Dorsolateral prefrontal cortex (tissue), 120 donors: ENCODE measurements at regions of chr11 and their contacts with region 1.

Region 1: GRCh38 chr11:20647976-20648565 is 21.3 kb upstream of the NELL1 start:
- DNase-seq: peak in 3 of 10 donors; percentile 39 to 62 (median 50)
- H3K4me3 ChIP-seq: no peak overlapping the region
- H3K27ac ChIP-seq: no peak overlapping the region
- H3K27me3 ChIP-seq: peaks cover 0 to 9% (median 0%) of the 10 kb centered on the region in 45 donors
- CTCF ChIP-seq: peak; percentile 71 to 98 (median 94)

Region 2: DNA sequence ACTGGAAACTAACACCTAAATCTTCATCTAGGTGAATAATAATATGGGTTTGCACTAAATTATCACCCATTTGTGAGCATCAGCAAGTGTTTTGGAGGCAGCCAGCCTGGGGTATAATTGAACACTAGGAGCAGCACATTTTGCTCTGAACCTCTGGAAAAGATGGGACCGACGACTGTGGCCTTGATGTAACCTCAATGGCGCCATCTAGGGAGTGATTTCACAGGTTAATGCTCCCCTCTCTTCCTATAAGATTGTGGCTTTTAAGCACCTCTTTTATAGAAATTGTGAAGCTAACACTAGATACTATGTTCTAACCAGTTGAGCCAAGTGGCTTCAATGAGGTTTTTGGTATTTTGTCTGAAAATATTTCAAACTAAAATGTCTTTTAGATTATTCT is 225.0 kb after region 1 on chr11:
- intact Hi-C with region 1: loop called in 1 of 2 experiments (anchors 10 kb)
- DNase-seq: no peak
- H3K4me3 ChIP-seq: no peak overlapping the region
- H3K27ac ChIP-seq: no peak overlapping the region
- H3K27me3 ChIP-seq: no peaks in the 10 kb centered on the region
- CTCF ChIP-seq: peak in 43 of 56 donors; percentile 6 to 56 (median 35)

Region 3: GRCh38 chr11:21511835-21512440 is 863.9 kb after region 1 on chr11:
- intact Hi-C with region 1: loop called in 1 of 2 experiments (anchors 5 kb)
- DNase-seq: peak in 8 of 10 donors; percentile 3 to 64 (median 40)
- H3K4me3 ChIP-seq: no peak overlapping the region
- H3K27ac ChIP-seq: no peak overlapping the region
- H3K27me3 ChIP-seq: no peaks in the 10 kb centered on the region
- CTCF ChIP-seq: peak in 55 of 56 donors; percentile 18 to 68 (median 49)

Region 4: DNA sequence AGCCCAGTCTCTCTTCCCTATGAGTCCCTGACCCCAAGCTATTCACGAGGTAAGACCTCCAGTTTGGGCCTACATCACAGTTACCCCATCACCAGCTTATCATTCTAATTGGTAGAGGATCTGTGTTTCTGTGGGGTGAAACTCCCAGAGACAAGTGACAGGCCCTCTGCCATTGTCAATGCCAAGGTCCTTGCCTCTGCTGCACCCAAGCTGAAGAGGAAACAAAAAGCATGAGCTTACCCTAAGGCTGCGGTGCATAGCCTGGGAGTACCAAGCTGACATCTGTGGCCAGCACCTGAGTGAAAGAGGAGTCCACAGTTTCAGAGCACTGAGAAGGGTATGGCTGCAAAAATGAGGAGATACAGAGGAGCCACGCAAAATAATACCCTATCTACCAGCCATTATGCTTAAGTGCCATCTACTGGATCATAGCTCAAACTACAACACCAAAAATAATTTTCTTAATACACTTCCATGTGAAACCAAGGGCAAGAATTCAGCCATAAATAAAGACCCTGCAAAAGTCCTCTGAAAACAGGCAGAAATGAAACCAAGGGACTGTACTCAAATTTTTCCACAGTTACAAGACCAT is 1482.5 kb after region 1 on chr11:
- intact Hi-C with region 1: loop called in 1 of 2 experiments (anchors 10 kb)
- DNase-seq: no peak
- H3K4me3 ChIP-seq: no peak overlapping the region
- H3K27ac ChIP-seq: no peak overlapping the region
- H3K27me3 ChIP-seq: no peaks in the 10 kb centered on the region
- CTCF ChIP-seq: peak in 51 of 56 donors; percentile 26 to 65 (median 47)

Region 5: GRCh38 chr11:22304337-22304961 is 1656.4 kb after region 1 on chr11:
- intact Hi-C with region 1: loop called in 1 of 2 experiments (anchors 10 kb)
- DNase-seq: no peak
- H3K4me3 ChIP-seq: no peak overlapping the region
- H3K27ac ChIP-seq: no peak overlapping the region
- H3K27me3 ChIP-seq: peaks cover 0 to 13% (median 0%) of the 10 kb centered on the region in 45 donors
- CTCF ChIP-seq: peak; percentile 67 to 92 (median 80)